Astrocyte of the spinal cord (primary cell): ENCODE measurements at regions of chr19 and their contacts with region 1.

Region 1: GRCh38 chr19:14081325-14082093 is 4.1 kb downstream of the C19orf67 start:
- DNase-seq: peak; percentile 99
- H3K4me3 ChIP-seq: peak overlapping the region; percentile 62
- CTCF ChIP-seq: no peak

Region 2: GRCh38 chr19:13880059-13881043 is 201.2 kb before region 1 on chr19:
- in situ Hi-C with region 1: loop called (anchors 25 kb)
- DNase-seq: peak; percentile 94
- H3K4me3 ChIP-seq: peak overlapping the region; percentile 3
- CTCF ChIP-seq: peak; percentile 98

Region 3: GRCh38 chr19:14198384-14199376 is 117.2 kb after region 1 on chr19:
- in situ Hi-C with region 1: no loop called
- DNase-seq: no peak
- H3K4me3 ChIP-seq: no peak overlapping the region
- CTCF ChIP-seq: no peak